ENCODE measurements at regions of chr16 and their contacts with region 1.

Region 1: DNA sequence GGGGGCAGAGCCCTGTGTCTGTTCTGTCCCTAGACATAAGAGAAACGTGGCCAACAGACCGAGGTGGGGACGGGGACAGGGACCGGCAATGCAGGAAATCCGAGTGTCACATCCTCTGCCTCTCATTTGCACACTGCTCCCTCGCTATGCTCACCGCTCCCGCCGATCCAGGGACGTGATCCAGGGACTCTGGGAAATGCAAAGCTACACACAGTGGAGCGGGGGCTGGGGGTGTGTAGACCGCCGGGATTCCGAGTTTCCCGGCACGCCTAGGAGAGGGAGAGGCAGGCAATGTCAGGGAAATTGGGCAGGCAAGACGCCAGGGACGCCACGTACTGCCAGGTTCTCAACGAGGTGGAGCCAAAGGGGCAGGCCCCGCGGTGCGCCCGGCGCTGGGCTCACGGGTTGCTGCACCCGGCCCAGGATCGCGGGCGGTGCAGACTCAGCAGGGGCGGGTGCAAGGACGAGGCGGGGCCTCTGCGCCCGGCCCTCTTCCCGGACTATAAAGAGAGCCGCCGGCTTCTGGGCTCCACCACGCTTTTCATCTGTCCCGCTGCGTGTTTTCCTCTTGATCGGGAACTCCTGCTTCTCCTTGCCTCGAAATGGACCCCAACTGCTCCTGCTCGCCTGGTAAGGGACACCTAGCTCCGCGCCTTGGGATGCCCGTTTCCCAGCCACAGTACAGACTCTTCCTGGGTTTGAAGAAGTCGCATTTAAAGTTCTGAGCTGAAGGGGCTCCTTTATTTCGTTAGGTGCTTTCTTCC is at the start of gene MT1X:
- DNase-seq: peak; percentile 95
- ATAC-seq: peak; percentile 94
- H3K4me3 Mint-ChIP-seq: peak within 1 kb of the TSS; percentile 97
- H3K27ac Mint-ChIP-seq: peak within 1 kb of the TSS; percentile 95
- H3K4me1 Mint-ChIP-seq: peaks cover 25% of the 10 kb centered on the region
- H3K27me3 Mint-ChIP-seq: no peaks in the 10 kb centered on the region
- total RNA-seq, gene MT1X: 35.0 to 35.4 TPM

Region 2: DNA sequence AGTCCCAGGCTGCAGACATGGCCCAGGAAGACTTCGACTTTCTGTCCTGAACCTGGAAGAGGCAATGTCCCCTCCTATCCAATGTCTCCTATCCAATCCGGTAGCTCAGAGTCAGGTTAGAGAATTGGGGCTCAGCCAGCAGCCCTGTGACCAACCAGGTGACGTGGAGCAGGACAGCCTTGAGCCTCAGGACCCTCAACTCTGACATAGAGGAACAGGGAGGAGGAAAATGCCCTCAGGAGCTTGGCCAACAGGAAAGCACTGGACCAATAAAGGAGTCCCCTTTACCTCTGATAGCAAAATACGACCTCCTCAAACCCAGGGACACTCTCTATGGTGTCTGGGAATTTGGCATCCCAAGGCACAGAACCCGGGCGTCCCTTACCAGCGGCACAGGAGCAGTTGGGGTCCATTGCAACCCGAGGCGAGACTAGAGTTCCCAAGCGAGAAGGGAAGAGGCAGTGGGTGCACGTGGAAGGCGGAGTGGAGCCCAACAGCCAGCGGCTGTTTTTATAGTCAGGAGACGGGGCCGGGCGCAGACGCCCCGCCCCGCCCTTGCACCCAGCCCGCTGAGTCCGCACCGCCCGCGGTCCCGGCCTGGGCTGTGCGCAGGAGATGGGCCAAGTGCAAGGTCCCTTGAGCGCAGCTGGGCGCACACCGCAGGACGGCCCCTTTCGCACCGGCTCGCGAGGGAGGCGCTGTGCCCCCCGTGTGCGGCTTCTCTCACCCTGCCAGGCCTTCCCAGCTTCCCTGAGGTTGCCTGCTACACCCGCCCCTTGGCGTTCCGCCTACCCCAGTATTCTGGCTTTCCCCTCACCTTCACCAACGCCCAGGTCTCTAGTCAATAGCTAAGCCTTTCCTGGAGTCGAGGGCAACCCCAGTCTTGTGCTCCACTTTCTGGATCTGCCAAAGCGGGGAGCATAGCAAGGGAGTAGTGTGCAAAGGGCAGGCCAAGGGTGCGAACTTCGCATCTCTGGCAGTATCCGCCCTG is 14.2 kb before region 1 on chr16 and contains the start of gene MT1G:
- POLR2A ChIA-PET with region 1: interaction called, 13 read pairs
- DNase-seq: peak; percentile 71
- ATAC-seq: peak; percentile 75
- H3K4me3 Mint-ChIP-seq: peak within 1 kb of the TSS; percentile 66
- H3K27ac Mint-ChIP-seq: no peak within 1 kb of the TSS
- H3K4me1 Mint-ChIP-seq: peaks cover 32% of the 10 kb centered on the region
- H3K27me3 Mint-ChIP-seq: peaks cover 63% of the 10 kb centered on the region
- total RNA-seq, gene MT1G: 4.0 to 5.0 TPM

Region 3: GRCh38 chr16:56715120-56715519 is 33.0 kb after region 1 on chr16:
- POLR2A ChIA-PET with region 1: no interaction called
- DNase-seq: no peak
- ATAC-seq: no peak
- H3K4me3 Mint-ChIP-seq: no peak overlapping the region
- H3K27ac Mint-ChIP-seq: no peak overlapping the region
- H3K4me1 Mint-ChIP-seq: peaks cover 14% of the 10 kb centered on the region
- H3K27me3 Mint-ChIP-seq: no peaks in the 10 kb centered on the region

Region 4: GRCh38 chr16:56767024-56767423 is 84.9 kb after region 1 on chr16:
- POLR2A ChIA-PET with region 1: no interaction called
- DNase-seq: no peak
- ATAC-seq: no peak
- H3K4me3 Mint-ChIP-seq: no peak overlapping the region
- H3K27ac Mint-ChIP-seq: no peak overlapping the region
- H3K4me1 Mint-ChIP-seq: peaks cover 10% of the 10 kb centered on the region
- H3K27me3 Mint-ChIP-seq: no peaks in the 10 kb centered on the region